Heart left ventricle (tissue), 16 donors: ENCODE measurements at regions of chr7 and their contacts with region 1.

Region 1: DNA sequence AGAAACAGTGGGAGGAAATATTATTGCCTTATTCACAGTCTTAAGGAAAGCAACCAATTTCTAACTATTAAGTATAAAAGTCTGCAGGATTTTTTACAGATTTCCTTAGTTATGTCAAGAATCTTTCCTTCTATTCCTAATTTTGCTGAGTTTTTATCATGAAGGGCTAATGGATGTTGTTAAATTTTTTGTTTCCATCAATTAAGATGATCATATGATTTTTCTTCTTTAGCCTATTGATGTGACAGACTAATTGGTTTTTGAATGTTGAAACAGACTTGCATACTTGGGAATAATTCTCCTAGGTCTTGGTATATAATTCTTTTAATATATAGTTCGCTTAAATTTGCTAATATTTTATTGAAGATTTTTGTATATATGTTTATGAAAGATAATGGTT is 569.1 kb upstream of the KCND2 start:
- DNase-seq: no peak
- ATAC-seq: no peak
- H3K4me3 ChIP-seq: no peak overlapping the region
- H3K27ac ChIP-seq: no peak overlapping the region
- H3K4me1 ChIP-seq: no peaks in the 10 kb centered on the region
- H3K27me3 ChIP-seq: no peaks in the 10 kb centered on the region
- CTCF ChIP-seq: no peak
- POLR2A ChIP-seq: no peak

Region 2: GRCh38 chr7:119724041-119724792 is 20.3 kb after region 1 on chr7:
- intact Hi-C with region 1: loop called in 1 of 10 experiments (anchors 2 kb)
- DNase-seq: peak in 1 of 5 donors; percentile 49
- ATAC-seq: no peak
- H3K4me3 ChIP-seq: no peak overlapping the region
- H3K27ac ChIP-seq: no peak overlapping the region
- H3K4me1 ChIP-seq: no peaks in the 10 kb centered on the region
- H3K27me3 ChIP-seq: no peaks in the 10 kb centered on the region
- CTCF ChIP-seq: no peak
- POLR2A ChIP-seq: no peak